ENCODE measurements at regions of chr10 and their contacts with region 1.

Region 1: GRCh38 chr10:128568990-128569945 is 443.0 kb upstream of the MKI67 start:
- DNase-seq: no peak
- H3K4me3 ChIP-seq: no peak overlapping the region
- H3K27ac ChIP-seq: no peak overlapping the region
- H3K4me1 ChIP-seq: no peaks in the 10 kb centered on the region; a peak in 1 of 7 replicates
- H3K27me3 ChIP-seq: no peaks in the 10 kb centered on the region; a peak in 1 of 7 replicates
- CTCF ChIP-seq: no peak
- EP300 ChIP-seq: no peak
- POLR2A ChIP-seq: no peak
- RAD21 ChIP-seq: no peak

Region 2: GRCh38 chr10:128557149-128557710 is 12.0 kb before region 1 on chr10:
- CTCF ChIA-PET with region 1: interaction called, 18 read pairs
- POLR2A ChIA-PET with region 1: no interaction called
- DNase-seq: no peak
- H3K4me3 ChIP-seq: no peak overlapping the region
- H3K27ac ChIP-seq: no peak overlapping the region
- H3K4me1 ChIP-seq: peaks cover 0 to 3% (median 2%) of the 10 kb centered on the region in 4 experiments; a peak in 2 of 7 replicates
- H3K27me3 ChIP-seq: no peaks in the 10 kb centered on the region
- CTCF ChIP-seq: peak in 2 of 3 experiments; percentile 2 to 30; a peak in 2 of 4 replicates
- EP300 ChIP-seq: no peak
- POLR2A ChIP-seq: no peak
- RAD21 ChIP-seq: peak in 1 of 2 experiments; percentile 22; a peak in 1 of 4 replicates

Region 3: DNA sequence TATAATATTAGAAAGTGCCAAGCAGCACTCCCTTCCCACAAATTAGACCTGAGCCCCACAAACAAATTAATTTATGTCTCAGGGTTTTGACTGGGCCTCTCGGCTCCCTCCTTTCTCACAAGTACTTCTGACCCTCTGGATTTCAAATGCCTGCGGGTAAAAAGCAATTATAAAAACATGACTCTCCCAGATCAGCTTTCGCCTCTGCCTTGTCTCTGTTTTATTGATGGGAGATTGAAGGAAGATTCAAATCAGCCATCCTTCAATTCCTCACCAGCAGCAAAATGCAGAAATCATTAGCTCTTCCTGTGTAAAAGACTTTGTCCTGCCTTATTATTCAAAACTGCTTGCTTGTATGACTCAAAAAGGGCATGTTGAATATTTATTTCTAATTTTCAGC is 10.6 kb after region 1 on chr10:
- CTCF ChIA-PET with region 1: interaction called, 10 read pairs
- POLR2A ChIA-PET with region 1: no interaction called
- DNase-seq: no peak
- H3K4me3 ChIP-seq: no peak overlapping the region
- H3K27ac ChIP-seq: no peak overlapping the region
- H3K4me1 ChIP-seq: peaks cover 0 to 10% (median 4%) of the 10 kb centered on the region in 4 experiments; a peak in 5 of 7 replicates
- H3K27me3 ChIP-seq: peaks cover 0 to 3% (median 1%) of the 10 kb centered on the region in 4 experiments; a peak in 3 of 7 replicates
- CTCF ChIP-seq: no peak
- EP300 ChIP-seq: no peak
- POLR2A ChIP-seq: no peak
- RAD21 ChIP-seq: no peak

Region 4: DNA sequence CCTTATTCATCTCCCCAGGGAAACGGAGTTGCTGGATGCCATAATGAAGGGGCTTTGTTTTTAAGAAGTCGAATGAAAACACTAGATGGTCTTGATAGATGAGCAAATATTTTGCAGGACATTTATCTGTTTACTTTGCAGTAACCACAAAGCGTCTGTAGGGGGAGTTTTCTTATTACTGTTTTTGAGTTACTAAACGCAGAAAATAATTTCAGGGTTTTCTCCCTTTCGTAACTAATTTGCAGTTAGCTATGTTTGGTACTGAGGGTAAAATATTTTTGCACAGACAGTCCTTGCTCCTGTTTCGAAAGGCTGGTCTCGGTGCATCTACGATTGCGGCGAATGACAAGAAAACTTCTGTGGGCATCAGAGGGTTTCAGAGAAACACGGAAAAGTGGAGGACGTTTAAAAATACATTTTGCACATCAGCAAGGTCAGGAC is 62.6 kb after region 1 on chr10:
- CTCF ChIA-PET with region 1: interaction called, 13 read pairs
- POLR2A ChIA-PET with region 1: no interaction called
- DNase-seq: no peak
- H3K4me3 ChIP-seq: no peak overlapping the region
- H3K27ac ChIP-seq: no peak overlapping the region
- H3K4me1 ChIP-seq: peaks cover 0 to 2% (median 0%) of the 10 kb centered on the region in 4 experiments; a peak in 3 of 7 replicates
- H3K27me3 ChIP-seq: no peaks in the 10 kb centered on the region
- CTCF ChIP-seq: peak in 2 of 3 experiments; percentile 20 to 47; a peak in 2 of 4 replicates
- EP300 ChIP-seq: no peak
- POLR2A ChIP-seq: no peak
- RAD21 ChIP-seq: peak; percentile 29 to 37; a peak in 3 of 4 replicates

Region 5: DNA sequence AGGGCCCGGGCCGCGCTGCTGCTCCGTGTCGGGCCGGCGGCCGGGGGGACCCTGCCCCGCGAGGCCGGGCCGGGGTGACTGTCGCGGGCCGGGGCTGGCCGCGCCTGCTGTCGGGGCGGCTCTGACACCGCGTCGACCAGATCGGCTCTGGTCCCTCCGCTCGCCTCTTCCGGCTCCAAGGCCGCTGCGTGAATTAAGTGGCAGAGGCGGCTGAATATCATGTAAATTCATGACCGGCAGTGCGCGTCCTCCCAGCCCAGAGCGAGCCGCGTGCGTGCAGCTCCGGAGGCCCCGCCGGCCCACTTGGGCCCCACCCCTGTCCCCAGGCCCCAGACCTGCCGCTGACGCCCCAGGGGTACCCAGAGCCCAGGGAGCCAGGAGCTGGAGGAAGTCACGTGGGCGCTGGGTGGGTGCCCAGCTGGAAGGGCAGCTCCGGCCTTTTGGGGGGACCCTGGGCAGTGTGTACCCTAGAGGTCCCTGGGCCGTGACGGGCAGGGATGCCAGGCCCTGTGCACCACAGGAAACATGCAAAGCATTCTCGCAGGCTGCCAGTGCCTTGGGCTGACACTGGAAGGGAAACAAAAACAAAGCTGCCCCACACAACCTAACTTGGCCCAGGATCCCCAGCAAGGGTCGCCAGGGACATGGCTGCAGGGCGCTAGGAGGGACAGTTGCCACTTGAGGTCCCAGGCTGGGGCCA is 141.0 kb after region 1 on chr10:
- CTCF ChIA-PET with region 1: no interaction called
- POLR2A ChIA-PET with region 1: no interaction called
- DNase-seq: no peak
- H3K4me3 ChIP-seq: no peak overlapping the region
- H3K27ac ChIP-seq: no peak overlapping the region
- H3K4me1 ChIP-seq: peaks cover 0 to under 1% (median 0%) of the 10 kb centered on the region in 4 experiments; a peak in 3 of 7 replicates
- H3K27me3 ChIP-seq: no peaks in the 10 kb centered on the region
- CTCF ChIP-seq: no peak
- EP300 ChIP-seq: no peak
- POLR2A ChIP-seq: no peak
- RAD21 ChIP-seq: no peak

Measured in H1 (cell line).